ENCODE measurements at regions of chr12 and their contacts with region 1.

Region 1: GRCh38 chr12:113358381-113359132 is at the start of gene PLBD2:
- DNase-seq: peak; percentile 96
- H3K4me3 Mint-ChIP-seq: peak within 1 kb of the TSS; percentile 84
- H3K27ac Mint-ChIP-seq: peak within 1 kb of the TSS; percentile 88
- H3K4me1 Mint-ChIP-seq: peaks cover 17% of the 10 kb centered on the region
- H3K27me3 Mint-ChIP-seq: no peaks in the 10 kb centered on the region
- total RNA-seq, gene PLBD2: 13.9 to 14.1 TPM

Region 2: DNA sequence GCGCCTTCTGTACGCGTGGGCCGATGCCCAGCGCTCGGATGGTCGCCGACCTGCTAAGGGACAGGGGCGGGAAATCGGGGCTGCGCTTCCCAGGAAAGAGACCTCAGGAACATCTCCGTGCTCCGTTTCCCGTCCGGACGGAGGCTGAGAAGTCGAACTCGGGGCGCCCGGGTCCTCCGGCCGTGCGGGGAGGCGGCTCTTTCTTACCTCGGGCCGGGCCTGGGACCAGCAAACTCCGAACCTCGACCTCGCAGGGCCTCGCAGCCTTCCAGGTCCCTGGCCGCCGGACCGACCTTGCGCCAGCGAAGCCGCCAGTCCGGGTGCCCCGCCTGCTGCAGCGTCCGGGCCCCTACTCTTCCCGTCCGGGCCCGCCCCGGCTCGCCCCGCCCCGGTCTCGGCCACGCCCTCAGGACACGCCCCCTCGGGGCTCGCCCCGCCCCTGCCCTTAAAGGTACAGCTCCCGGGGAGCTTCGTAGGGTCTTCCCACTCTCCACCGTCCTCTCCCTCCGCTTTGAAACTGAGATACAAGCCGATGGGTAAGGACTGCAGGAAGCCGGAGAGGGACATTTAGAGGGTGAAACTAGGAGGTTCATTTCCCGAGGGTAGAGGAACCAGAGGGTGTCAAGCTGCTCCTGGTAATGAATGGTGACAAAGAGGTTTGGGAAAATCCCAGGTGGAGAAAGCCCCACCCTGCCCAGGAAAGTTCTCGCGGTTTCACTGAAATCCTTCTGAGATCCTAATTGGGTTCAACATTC is 23.6 kb before region 1 on chr12 and contains the start of gene SLC8B1:
- CTCF ChIA-PET with region 1: interaction called, 3 read pairs
- intact Hi-C with region 1: loop called (anchors 1 kb)
- DNase-seq: peak; percentile 87
- H3K4me3 Mint-ChIP-seq: peak within 1 kb of the TSS; percentile 96
- H3K27ac Mint-ChIP-seq: peak within 1 kb of the TSS; percentile 84
- H3K4me1 Mint-ChIP-seq: peaks cover 34% of the 10 kb centered on the region
- H3K27me3 Mint-ChIP-seq: no peaks in the 10 kb centered on the region
- total RNA-seq, gene SLC8B1: 20.2 to 20.4 TPM

Measured in activated naive CD4-positive, alpha-beta T cell treated with anti-CD3 and anti-CD28 coated beads for 36 hours (primary cell).